B cell (primary cell): ENCODE measurements at regions of chr2 and their contacts with region 1.

Region 1: GRCh38 chr2:61694312-61695274 is 156.4 kb upstream of the XPO1 start:
- DNase-seq: peak; percentile 94
- ATAC-seq: peak; percentile 96
- H3K4me3 ChIP-seq: peak overlapping the region; percentile 50 to 84 (median 79)
- H3K4me3 Mint-ChIP-seq: peak overlapping the region; percentile 94
- H3K27ac ChIP-seq: peak overlapping the region; percentile 54 to 82
- H3K27ac Mint-ChIP-seq: peak overlapping the region; percentile 88
- H3K4me1 ChIP-seq: peaks cover 9 to 17% of the 10 kb centered on the region in 2 donors
- H3K4me1 Mint-ChIP-seq: peaks cover 13% of the 10 kb centered on the region
- H3K27me3 ChIP-seq: no peaks in the 10 kb centered on the region
- H3K27me3 Mint-ChIP-seq: no peaks in the 10 kb centered on the region
- CTCF ChIP-seq: peak; percentile 70

Region 2: DNA sequence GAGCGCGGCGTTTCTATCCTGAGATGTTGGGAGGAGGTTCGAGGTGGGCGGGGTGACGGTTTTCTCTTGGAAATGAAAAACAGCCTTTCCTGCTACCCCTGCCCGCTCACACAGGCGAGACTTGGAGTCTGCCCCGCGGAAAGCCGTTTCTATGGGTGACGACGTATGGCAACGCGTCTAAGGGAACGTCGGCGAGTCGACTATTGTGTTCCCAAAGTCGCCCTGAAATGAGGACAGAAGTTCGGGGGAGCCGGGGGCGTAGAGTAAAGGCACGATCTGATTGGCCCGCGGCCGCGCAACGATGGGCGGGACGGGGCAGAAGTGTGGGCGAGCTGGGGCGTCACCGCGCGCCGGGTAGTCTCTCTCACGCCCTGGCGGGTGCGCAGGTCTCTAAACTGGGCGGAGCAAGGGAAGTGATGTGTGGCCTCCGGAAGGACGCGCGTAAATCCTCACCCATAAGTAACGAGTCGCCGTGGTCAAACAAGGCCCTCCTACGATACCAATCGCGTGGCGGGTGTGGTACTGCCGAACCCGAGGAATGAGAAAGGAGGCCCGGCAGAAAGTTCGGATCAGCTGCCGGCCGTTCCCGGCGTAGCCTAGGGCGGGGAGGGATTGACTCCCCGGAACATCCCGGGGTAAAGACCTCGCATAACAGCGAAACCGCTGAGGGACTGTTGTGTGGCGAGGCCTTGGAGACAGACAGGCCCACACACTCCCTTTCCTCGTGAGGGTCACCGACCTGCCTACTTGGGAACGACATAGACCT is 69.6 kb after region 1 on chr2:
- CTCF ChIA-PET with region 1: interaction called, 3 read pairs
- POLR2A ChIA-PET with region 1: interaction called, 7 read pairs
- intact Hi-C with region 1: loop called (anchors 1 kb)
- DNase-seq: peak; percentile 98
- ATAC-seq: peak; percentile 98
- H3K4me3 ChIP-seq: peak overlapping the region; percentile 89 to 94 (median 92)
- H3K4me3 Mint-ChIP-seq: peak overlapping the region; percentile 90
- H3K27ac ChIP-seq: peak overlapping the region; percentile 96 to 98
- H3K27ac Mint-ChIP-seq: peak overlapping the region; percentile 96
- H3K4me1 ChIP-seq: peaks cover 4 to 10% of the 10 kb centered on the region in 2 donors
- H3K4me1 Mint-ChIP-seq: peaks cover 14% of the 10 kb centered on the region
- H3K27me3 ChIP-seq: no peaks in the 10 kb centered on the region
- H3K27me3 Mint-ChIP-seq: peaks cover 2% of the 10 kb centered on the region
- CTCF ChIP-seq: no peak

Region 3: DNA sequence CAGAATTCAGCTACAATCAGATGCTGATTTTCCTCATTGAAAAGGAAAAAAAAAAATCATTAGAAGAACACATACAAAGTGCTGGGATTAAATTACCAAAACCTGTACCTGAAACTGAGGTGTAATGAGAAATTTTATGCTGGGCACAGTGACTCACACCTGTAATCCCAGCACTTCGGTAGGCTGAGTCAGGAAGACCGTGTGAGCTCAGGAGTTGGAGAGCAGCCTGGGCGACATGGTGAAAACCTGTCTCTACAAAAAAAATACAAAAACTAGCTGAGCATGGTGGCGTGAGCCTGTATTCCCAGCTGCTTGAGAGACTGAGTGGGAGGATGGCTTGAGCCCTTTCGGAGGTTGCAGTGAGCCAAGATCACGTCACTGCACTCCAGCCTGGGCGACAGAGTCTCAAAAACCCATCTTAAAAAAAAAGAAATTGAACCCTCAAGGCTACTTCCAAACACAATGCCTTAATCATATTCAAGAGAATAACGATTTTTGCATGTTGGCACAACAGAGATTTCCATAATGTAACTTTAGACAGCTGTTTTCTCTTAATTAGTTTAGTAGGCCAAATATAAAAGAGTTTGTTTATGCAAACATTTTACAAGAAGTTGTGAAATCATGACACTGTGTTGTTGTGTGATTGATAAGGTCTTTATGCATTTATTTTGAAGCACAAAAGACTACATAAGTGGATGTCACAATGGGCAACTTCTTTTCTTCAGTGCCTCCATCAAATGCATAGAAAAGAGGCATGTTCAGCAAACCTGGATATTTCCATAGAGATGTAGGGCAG is 95.4 kb after region 1 on chr2:
- CTCF ChIA-PET with region 1: no interaction called
- POLR2A ChIA-PET with region 1: no interaction called
- intact Hi-C with region 1: loop called (anchors 1 kb)
- DNase-seq: no peak
- ATAC-seq: no peak
- H3K4me3 ChIP-seq: no peak overlapping the region
- H3K4me3 Mint-ChIP-seq: no peak overlapping the region
- H3K27ac ChIP-seq: no peak overlapping the region
- H3K27ac Mint-ChIP-seq: no peak overlapping the region
- H3K4me1 ChIP-seq: peaks cover 0 to 4% of the 10 kb centered on the region in 2 donors
- H3K4me1 Mint-ChIP-seq: peaks cover 4% of the 10 kb centered on the region
- H3K27me3 ChIP-seq: peaks cover 0 to 4% (median 0%) of the 10 kb centered on the region in 4 experiments
- H3K27me3 Mint-ChIP-seq: peaks cover 4% of the 10 kb centered on the region
- CTCF ChIP-seq: no peak

Region 4: DNA sequence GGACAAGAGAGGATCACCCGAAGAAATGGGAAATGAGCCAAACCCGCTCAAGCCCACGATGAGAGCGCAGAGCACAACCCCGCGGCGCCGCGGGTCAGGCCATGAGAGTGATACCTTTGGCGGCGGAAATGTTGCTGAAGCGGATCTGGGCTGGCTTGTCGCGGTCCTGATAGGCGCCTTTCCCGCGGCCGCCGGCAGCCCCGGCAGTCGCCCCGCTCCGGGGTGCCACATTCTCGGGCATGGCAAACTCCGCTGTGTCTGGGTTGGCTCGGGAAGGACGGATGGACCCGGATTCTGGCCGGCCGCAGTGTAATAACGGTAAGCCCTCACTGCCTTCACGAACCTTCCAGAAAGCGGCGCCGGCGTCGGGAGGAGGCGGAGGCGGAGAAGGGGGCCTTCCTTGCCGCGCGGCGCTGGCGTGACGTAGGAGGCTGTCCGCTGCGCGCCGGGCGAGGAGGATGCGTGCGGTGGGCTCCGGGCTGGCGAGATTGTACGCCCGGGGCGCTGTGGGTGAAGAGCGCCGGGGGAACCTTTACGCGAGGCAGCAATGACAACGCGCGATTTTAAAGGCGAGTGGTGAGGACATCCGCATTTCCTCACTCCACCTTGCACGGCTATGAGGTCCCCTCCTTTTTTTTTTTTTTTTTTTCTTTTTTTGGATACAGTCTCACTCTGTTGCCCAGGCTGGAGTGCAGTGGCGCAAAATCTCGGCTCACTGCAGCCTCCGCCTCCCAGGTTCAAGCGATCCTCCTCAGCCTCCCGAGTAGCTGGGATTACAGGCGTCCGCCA is 193.9 kb after region 1 on chr2 and contains the start of gene CCT4:
- CTCF ChIA-PET with region 1: no interaction called
- POLR2A ChIA-PET with region 1: no interaction called
- intact Hi-C with region 1: loop called (anchors 1 kb)
- DNase-seq: peak; percentile 98
- ATAC-seq: peak; percentile 85
- H3K4me3 ChIP-seq: peak within 1 kb of the TSS; percentile 79 to 92 (median 89)
- H3K4me3 Mint-ChIP-seq: peak within 1 kb of the TSS; percentile 100
- H3K27ac ChIP-seq: peak within 1 kb of the TSS; percentile 95 to 96
- H3K27ac Mint-ChIP-seq: peak within 1 kb of the TSS; percentile 100
- H3K4me1 ChIP-seq: peaks cover 11 to 25% of the 10 kb centered on the region in 2 donors
- H3K4me1 Mint-ChIP-seq: peaks cover 32% of the 10 kb centered on the region
- H3K27me3 ChIP-seq: no peaks in the 10 kb centered on the region
- H3K27me3 Mint-ChIP-seq: no peaks in the 10 kb centered on the region
- CTCF ChIP-seq: no peak
- total RNA-seq, gene CCT4: 86.4 and 88.0 TPM in 2 replicates

Region 5: GRCh38 chr2:63588385-63589147 is 1894.0 kb after region 1 on chr2 and contains the starts of genes MDH1 and WDPCP:
- CTCF ChIA-PET with region 1: no interaction called
- POLR2A ChIA-PET with region 1: no interaction called
- intact Hi-C with region 1: loop called (anchors 5 kb)
- DNase-seq: peak; percentile 98
- ATAC-seq: peak; percentile 84
- H3K4me3 ChIP-seq: peak within 1 kb of the TSS; percentile 93 to 98 (median 94)
- H3K4me3 Mint-ChIP-seq: peak within 1 kb of the TSS; percentile 91
- H3K27ac ChIP-seq: peak within 1 kb of the TSS; percentile 93 to 94
- H3K27ac Mint-ChIP-seq: peak within 1 kb of the TSS; percentile 93
- H3K4me1 ChIP-seq: peaks cover 14 to 19% of the 10 kb centered on the region in 2 donors
- H3K4me1 Mint-ChIP-seq: peaks cover 37% of the 10 kb centered on the region
- H3K27me3 ChIP-seq: no peaks in the 10 kb centered on the region
- H3K27me3 Mint-ChIP-seq: no peaks in the 10 kb centered on the region
- CTCF ChIP-seq: no peak
- total RNA-seq, gene MDH1: 87.8 and 95.6 TPM in 2 replicates
- total RNA-seq, gene WDPCP: 22.8 and 31.4 TPM in 2 replicates